ENCODE measurements at regions of chr5 and their contacts with region 1.

Region 1: DNA sequence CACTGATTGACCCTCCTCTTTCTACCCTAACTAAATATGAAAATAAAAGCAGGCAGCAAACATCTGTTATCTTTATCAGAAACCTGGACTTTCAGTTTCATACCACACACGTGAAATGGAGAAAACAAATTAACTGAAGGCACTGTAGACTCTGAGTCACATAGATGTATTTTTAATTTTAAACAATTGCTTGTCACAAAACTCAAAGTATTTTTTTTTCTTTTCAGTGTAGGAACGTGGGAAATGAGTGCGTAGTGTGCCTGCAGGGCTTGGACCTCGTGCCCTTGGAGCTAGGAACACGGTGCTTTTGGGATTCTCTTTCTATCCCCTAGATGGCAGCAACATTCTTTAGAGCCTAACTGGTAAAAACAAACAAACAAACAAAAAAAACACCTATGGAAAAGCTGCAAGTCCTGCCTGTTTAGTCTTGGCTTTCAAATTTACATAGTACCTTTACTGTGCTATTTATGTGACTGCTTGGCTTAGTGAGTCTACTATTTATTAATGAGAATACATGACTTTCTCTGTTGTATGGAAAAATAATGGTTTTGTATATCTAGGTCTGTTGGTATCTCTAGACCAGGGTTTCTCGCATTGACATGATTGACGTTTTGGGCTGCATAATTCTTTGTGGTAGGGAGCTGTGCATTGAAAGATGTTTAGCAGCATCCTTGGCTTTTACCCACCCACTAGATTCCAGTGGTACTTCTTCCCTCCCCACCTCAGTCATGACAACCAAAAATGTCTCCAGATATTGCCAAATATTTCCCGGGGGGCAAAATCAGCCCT is 16.8 kb upstream of the ACTBL2 start:
- DNase-seq: no peak
- ATAC-seq: peak; percentile 65

Region 2: GRCh38 chr5:57298295-57298984 is 201.0 kb before region 1 on chr5:
- intact Hi-C with region 1: loop called (anchors 10 kb)
- DNase-seq: peak; percentile 94
- ATAC-seq: peak; percentile 94

Measured in sciatic nerve (tissue), 2 donors.